Ovary (tissue), 10 donors: ENCODE measurements at regions of chr7 and their contacts with region 1.

Region 1: DNA sequence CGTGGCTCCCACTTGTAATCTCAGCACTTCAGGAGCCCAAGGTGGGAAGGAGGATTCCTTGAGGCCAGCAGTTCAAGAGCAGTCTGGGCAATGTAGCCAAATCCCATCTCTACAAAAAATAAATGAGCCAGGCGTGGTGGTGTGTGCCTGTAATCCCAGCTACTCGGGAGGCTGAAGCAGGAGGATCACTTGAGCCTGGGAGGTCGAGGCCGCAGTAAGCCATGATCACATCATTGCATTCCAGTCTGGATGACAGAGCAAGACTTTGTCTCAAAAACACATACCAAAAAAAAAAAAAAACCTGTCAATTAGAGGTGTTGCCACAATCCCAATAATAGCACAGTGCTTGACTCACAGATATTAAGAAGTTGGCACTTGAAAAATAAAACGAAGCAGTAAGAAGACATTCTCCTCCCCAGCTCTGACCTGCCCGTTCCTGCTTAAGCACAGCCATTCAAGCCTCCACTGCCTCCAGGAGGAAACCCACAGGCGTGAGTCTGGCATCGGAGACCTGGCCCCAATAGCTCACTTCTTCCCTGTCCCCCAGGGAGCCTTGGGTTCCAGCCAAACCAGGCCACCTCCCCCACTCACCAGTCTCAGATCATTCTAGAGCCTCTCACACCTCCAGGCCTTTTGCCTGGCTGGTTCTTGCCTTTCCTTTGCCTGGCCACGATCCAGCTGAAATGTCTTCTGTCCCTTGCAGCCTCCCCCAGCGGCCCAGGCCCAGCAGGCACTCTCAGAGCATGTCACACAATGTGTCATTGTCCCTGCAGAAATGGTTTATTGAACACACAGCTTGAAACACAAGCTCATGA is 45.3 kb upstream of the GTF2I start:
- DNase-seq: no peak
- H3K4me3 ChIP-seq: no peak overlapping the region
- H3K27ac ChIP-seq: no peak overlapping the region
- H3K4me1 ChIP-seq: no peaks in the 10 kb centered on the region
- H3K27me3 ChIP-seq: no peaks in the 10 kb centered on the region
- CTCF ChIP-seq: no peak
- EP300 ChIP-seq: no peak
- POLR2A ChIP-seq: no peak

Region 2: GRCh38 chr7:74633451-74633921 is 21.3 kb after region 1 on chr7:
- intact Hi-C with region 1: no loop called
- DNase-seq: no peak
- H3K4me3 ChIP-seq: no peak overlapping the region
- H3K27ac ChIP-seq: no peak overlapping the region
- H3K4me1 ChIP-seq: peaks cover 2% of the 10 kb centered on the region
- H3K27me3 ChIP-seq: no peaks in the 10 kb centered on the region
- CTCF ChIP-seq: no peak
- EP300 ChIP-seq: no peak
- POLR2A ChIP-seq: no peak

Region 3: DNA sequence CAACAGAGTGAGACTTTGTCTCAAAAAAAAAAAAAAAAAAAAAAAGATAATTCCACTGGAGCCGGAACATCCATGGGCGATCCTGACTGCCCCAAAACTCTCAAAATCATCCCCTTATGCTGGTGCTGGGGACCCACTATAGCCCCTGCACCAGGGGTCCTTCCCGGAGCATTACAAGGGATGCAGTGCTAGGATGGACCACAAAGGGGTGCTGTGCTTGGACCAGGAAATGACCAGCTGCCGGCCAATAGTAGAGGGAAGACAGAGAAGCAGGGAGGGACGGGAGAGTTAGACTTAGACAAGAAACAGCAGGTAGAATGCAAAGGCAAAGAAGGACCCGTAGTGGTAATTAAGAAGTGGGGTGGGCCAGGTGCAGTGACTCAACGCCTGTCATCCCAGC is 420.8 kb after region 1 on chr7:
- intact Hi-C with region 1: loop called in 1 of 4 experiments (anchors 10 kb)
- DNase-seq: no peak
- H3K4me3 ChIP-seq: no peak overlapping the region
- H3K27ac ChIP-seq: no peak overlapping the region
- H3K4me1 ChIP-seq: no peaks in the 10 kb centered on the region
- H3K27me3 ChIP-seq: no peaks in the 10 kb centered on the region
- CTCF ChIP-seq: no peak
- EP300 ChIP-seq: no peak
- POLR2A ChIP-seq: no peak